Ovary (tissue), 10 donors: ENCODE measurements at regions of chr4 and their contacts with region 1.

Region 1: DNA sequence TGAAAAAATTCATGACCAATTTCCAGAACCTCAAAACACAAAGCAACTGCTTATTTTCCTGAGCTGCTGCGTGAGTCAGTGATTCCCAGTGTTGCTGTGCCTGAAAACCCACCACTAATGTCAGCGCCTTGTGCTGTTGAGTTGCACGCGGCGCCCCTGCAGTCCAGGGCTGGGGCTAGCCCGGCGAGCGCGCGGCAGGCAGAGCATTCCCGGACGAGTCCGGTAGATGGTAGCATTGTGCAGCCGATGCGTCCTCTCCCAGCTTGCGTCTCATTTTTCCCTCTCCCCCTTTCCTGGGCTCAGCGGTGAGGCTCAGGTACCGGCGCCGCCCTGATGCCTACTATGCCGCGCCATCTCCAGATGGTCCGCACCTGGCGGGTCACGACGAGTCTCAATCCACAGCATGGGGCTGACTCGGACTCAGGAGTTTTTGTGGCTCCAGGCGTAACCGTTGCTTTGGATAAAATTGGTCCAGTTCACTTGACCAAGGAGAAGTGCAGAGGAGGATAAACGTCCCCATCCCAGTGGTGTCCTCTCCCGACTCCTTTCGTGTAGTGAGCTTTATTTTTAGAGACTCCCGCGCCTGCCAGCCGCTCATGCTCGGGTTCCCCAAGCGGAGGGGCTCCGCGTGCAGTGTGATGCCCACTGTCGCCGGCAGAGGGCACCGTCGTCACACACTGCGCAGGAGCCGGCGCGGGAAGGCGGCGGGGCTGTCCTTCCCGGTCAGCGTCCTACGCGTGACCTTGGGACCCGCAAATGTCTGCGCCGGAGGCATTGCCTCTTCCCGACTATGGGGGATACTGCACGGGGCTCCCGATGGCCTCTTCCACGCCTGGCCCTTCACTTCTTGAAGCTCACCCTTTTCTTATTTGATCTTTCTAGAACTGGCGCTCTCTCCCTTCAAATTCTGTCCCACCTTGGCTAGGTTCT is 53.6 kb upstream of the IGFBP7 start:
- DNase-seq: peak; percentile 70 to 87 (median 80)
- H3K4me3 ChIP-seq: peak overlapping the region; percentile 44
- H3K27ac ChIP-seq: peak overlapping the region; percentile 64
- H3K4me1 ChIP-seq: no peaks in the 10 kb centered on the region
- H3K27me3 ChIP-seq: no peaks in the 10 kb centered on the region
- CTCF ChIP-seq: peak; percentile 77 to 88 (median 85)
- EP300 ChIP-seq: no peak
- POLR2A ChIP-seq: no peak

Region 2: DNA sequence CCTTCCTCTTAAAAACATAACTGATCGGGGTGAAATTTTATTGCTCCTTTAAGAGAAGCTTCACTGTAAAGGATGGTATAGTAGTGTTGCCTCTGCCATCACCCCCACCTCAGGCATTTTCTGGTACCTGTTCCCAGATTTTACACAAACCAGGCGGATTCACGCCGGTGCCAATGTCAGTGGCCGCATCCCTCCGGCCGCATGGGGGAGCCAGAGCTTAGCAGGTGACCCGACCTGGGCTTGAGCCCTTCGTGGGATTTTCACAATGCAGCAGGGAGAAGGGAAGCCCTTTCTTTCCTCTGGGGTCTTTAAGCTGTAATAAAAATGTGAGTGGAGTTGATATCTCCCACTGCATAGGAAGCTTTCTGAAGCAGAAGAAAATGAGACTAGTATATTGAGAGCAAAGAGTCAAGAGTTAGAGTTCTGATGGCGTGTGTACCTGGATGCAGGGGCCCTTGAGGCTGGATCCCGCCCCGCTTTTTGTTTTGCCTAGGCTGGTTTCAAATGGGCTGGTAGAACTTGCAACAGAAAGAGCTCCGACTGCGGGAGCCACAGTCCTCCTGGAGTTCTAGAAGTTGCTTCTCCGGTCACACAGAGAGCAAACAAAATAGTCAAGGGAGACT is 125.7 kb before region 1 on chr4:
- intact Hi-C with region 1: loop called in 2 of 4 experiments (anchors 5 to 10 kb)
- DNase-seq: peak; percentile 60 to 87 (median 77)
- H3K4me3 ChIP-seq: no peak overlapping the region
- H3K27ac ChIP-seq: no peak overlapping the region
- H3K4me1 ChIP-seq: peaks cover 12% of the 10 kb centered on the region
- H3K27me3 ChIP-seq: no peaks in the 10 kb centered on the region
- CTCF ChIP-seq: peak; percentile 60 to 66 (median 65)
- EP300 ChIP-seq: no peak
- POLR2A ChIP-seq: no peak

Region 3: GRCh38 chr4:57043347-57044251 is 120.2 kb before region 1 on chr4:
- intact Hi-C with region 1: loop called in 2 of 4 experiments (anchors 5 to 10 kb)
- DNase-seq: no peak
- H3K4me3 ChIP-seq: no peak overlapping the region
- H3K27ac ChIP-seq: peak overlapping the region in 1 of 2 donors; percentile 40
- H3K4me1 ChIP-seq: peaks cover 27% of the 10 kb centered on the region
- H3K27me3 ChIP-seq: no peaks in the 10 kb centered on the region
- CTCF ChIP-seq: no peak
- EP300 ChIP-seq: no peak
- POLR2A ChIP-seq: no peak